ENCODE measurements at regions of chr1 and their contacts with region 1.

Region 1: DNA sequence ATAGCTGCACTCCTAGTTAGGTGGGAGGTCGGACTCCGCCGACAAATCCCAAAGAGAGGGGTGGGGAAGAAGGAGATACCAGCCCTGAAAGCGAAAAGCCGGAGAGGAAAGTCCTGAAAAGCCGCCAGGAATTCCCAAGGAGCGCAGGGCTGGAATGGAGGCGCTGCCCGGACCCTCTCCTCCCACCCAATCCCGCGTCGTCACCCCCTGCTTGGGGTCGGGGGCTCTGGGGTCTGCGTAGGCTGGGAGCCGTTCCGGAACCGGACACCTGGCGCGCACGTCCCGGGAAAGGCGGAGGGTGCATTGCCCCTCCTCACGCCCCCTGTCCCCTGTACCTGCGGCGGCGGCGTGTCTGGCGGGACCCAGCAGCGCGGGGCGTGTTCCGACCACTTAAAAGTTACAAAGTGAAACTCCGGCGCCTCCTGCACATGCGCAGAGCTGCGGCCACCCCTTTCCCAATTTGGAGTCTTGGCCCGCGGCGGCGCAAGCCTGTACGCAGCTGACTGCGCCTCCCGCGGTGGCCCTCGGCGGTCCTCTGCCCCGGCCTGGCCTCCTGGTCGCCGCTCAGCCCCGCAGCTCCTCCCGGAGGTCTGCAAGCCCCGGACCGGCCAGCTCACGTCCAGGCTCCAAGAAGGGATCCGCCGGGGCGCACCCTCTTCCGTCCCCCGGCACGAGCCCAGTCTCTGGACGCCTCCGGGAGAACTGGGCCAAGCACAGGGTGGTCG is at the start of gene TMEM63A:
- DNase-seq: peak; percentile 98
- H3K4me3 ChIP-seq: peak within 1 kb of the TSS; percentile 91 to 98 (median 94)
- H3K27ac ChIP-seq: peak within 1 kb of the TSS; percentile 88 to 91 (median 90)
- H3K4me1 ChIP-seq: peaks cover 0 to 54% (median 49%) of the 10 kb centered on the region in 4 donors
- H3K27me3 ChIP-seq: no peaks in the 10 kb centered on the region
- CTCF ChIP-seq: peak in 1 of 4 experiments; percentile 49
- EP300 ChIP-seq: no peak
- POLR2A ChIP-seq: peak; percentile 66 to 84
- total RNA-seq, gene TMEM63A: 25.3 to 94.4 (median 36.9) TPM

Region 2: DNA sequence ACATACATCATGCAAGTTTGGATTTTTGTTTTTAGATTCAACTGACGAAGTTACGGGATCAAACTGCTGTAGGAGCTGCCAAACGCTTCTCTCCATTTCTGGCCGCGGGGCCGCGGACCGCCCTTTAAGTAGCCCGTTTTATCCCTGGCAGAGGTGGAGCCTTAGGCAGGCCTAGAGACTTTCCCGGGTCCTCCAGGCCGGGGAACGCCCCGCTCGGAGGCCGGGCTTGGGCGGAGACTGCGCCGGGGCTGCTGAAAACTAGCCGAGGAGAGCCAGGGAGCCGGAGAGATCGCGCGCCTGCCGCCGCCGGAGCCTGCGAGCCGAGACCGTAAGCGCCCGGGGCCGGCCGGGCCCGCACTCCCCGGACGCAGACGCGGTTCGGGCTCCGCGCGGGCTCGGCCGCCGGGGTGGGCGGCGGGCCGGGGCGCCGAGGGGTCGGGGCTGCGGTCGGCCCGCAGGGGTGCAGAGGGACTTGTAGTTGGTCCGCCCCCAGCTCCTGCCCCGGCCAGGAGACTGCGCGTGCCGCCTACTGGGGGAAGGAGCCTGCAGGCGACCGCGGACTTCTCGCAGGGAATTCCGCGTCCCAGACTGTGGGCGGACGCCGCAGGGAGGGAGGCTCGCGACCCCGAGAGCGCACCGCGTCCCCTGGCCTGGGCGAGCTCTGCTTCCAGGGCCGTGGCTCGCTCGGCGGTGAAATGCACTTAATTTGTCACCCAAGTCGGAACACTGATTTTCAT is 72.1 kb before region 1 on chr1 and contains the start of gene EPHX1:
- intact Hi-C with region 1: loop called (anchors 5 kb)
- DNase-seq: peak; percentile 95
- H3K4me3 ChIP-seq: peak within 1 kb of the TSS; percentile 69 to 73 (median 71)
- H3K27ac ChIP-seq: peak within 1 kb of the TSS; percentile 88 to 95 (median 88)
- H3K4me1 ChIP-seq: peaks cover 0 to 46% (median 45%) of the 10 kb centered on the region in 4 donors
- H3K27me3 ChIP-seq: no peaks in the 10 kb centered on the region
- CTCF ChIP-seq: peak in 2 of 4 experiments; percentile 42 to 45
- EP300 ChIP-seq: no peak
- POLR2A ChIP-seq: peak; percentile 51 to 55
- total RNA-seq, gene EPHX1: 43.6 to 78.9 (median 67.7) TPM

Region 3: DNA sequence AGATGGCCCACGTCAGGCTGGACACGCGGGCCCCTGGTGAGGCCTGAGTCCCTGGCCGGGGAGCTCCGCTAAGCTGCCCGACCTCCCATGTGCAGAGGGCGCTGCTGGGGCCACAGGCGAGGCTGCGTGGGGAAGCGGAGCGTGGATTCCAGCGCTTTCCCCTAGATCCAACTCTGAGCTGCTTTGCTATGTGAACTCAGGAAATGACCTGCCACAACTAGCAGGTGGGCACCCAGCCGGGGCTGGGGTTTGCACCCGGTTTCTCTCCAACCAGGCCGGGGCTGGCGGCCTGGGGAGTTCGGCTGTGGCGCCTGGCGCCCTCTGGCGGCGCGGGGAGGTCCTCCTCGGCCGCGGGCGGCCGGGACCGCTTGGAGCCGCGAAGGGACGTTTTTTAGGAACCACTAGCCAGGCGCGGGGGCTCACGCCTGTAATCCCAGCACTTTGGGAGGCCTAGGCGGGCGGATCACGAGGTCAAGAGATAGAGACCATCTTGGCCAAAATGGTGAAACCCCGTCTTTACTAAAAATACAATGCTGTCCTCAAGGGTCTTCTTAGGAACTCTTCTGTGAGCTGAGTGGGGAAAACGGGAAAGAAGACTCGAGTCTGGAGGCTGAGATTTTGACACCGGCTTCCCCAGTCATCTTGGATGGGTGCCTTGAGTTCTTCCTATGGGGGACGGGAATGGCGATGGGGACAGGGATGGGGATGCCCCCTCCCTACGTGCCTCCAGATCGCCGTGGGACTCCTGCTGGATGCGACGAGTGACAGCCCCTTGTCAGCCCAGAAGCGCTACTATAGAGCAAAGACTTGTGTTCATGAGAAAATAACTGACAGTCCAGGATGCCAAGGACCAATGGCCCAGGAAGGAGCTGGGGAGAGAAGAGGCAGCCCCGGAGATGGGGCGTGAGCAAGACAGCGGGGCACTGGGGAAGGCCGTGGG is 29.3 kb after region 1 on chr1:
- intact Hi-C with region 1: loop called (anchors 2 kb)
- DNase-seq: peak; percentile 79
- H3K4me3 ChIP-seq: peak overlapping the region in 1 of 4 donors; percentile 8
- H3K27ac ChIP-seq: peak overlapping the region in 2 of 4 donors; percentile 25 to 38
- H3K4me1 ChIP-seq: peaks cover 0 to 11% (median 9%) of the 10 kb centered on the region in 4 donors
- H3K27me3 ChIP-seq: no peaks in the 10 kb centered on the region
- CTCF ChIP-seq: peak; percentile 73 to 96 (median 82)
- EP300 ChIP-seq: no peak
- POLR2A ChIP-seq: no peak

Region 4: DNA sequence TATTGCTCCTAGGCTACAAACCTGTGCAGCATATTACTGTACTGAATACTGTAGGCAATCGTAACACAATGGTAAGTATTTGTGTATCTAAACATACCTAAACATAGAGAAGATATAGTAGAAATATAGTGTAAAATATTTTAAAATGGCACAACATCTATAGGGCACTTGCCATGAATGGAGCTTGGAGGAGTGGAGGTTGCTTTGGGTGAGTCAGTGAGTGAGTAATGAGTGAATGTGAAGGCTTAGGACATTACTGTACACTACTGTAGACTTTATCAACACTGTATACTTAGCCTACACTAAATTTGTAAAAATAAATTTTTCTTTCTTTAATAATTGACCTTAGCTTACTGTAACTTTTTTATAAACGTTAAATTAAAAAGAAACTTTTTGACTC is 50.9 kb after region 1 on chr1:
- intact Hi-C with region 1: no loop called
- DNase-seq: no peak
- H3K4me3 ChIP-seq: no peak overlapping the region
- H3K27ac ChIP-seq: no peak overlapping the region
- H3K4me1 ChIP-seq: no peaks in the 10 kb centered on the region
- H3K27me3 ChIP-seq: no peaks in the 10 kb centered on the region
- CTCF ChIP-seq: no peak
- EP300 ChIP-seq: no peak
- POLR2A ChIP-seq: no peak

Region 5: GRCh38 chr1:225977937-225978748 is 96.0 kb after region 1 on chr1:
- intact Hi-C with region 1: loop called (anchors 5 kb)
- DNase-seq: peak; percentile 37
- H3K4me3 ChIP-seq: no peak overlapping the region
- H3K27ac ChIP-seq: no peak overlapping the region
- H3K4me1 ChIP-seq: peaks cover 0 to 7% (median 4%) of the 10 kb centered on the region in 4 donors
- H3K27me3 ChIP-seq: no peaks in the 10 kb centered on the region
- CTCF ChIP-seq: no peak
- EP300 ChIP-seq: no peak
- POLR2A ChIP-seq: no peak

Region 6: DNA sequence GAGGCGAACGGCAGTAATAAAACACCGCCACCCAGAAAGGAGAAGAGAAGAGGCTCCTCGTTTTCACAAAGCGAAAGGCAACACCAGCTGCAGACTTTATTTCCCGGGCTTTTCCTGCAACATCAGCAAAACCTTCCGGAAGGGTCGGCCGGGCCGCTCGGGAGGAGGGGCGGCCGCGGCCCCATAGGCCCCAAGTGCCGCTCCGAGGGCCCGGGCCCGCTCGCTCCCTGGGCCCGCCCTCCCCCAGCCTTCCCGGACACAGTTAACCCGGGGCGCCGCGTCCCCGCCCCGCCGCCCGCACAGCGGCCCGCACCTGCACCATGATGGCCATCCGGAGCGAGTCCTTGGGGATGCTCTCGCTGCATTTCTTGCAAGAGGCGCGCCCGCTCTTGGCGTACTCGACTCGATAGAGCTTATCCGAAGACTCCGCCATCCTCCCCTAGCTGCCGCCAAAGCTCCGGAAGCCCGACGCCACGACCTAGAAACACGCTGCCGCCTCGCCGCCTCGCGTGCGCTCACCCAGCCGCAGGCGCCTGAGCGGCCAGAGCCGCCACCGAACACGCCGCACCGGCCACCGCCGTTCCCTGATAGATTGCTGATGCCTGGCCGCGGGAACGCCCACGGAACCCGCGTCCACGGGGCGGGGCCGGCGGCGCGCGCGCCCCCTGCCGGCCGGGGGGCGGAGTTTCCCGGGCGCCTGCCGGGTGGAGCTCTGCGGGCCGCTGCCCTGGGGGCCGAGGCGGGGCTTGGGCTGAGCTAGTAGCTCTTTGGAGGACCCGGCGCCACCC is 525.6 kb after region 1 on chr1 and contains the start of gene PARP1:
- intact Hi-C with region 1: no loop called
- DNase-seq: peak; percentile 97
- H3K4me3 ChIP-seq: peak within 1 kb of the TSS; percentile 76 to 86 (median 82)
- H3K27ac ChIP-seq: peak within 1 kb of the TSS; percentile 89 to 94 (median 93)
- H3K4me1 ChIP-seq: peaks cover 0 to 46% (median 43%) of the 10 kb centered on the region in 4 donors
- H3K27me3 ChIP-seq: no peaks in the 10 kb centered on the region
- CTCF ChIP-seq: peak in 1 of 4 experiments; percentile 81
- EP300 ChIP-seq: no peak
- POLR2A ChIP-seq: peak; percentile 68 to 77
- total RNA-seq, gene PARP1: 107 to 168 (median 152) TPM